AG04450 (cell line): ENCODE measurements at regions of chr3 and their contacts with region 1.

Region 1: GRCh38 chr3:114336122-114336697 is 42.4 kb downstream of the TIGIT start:
- DNase-seq: no peak
- H3K4me3 ChIP-seq: no peak overlapping the region
- H3K27ac ChIP-seq: no peak overlapping the region
- H3K27me3 ChIP-seq: no peaks in the 10 kb centered on the region
- CTCF ChIP-seq: peak; percentile 53

Region 2: GRCh38 chr3:114223143-114223542 is 113.1 kb before region 1 on chr3:
- CTCF ChIA-PET with region 1: no interaction called
- POLR2A ChIA-PET with region 1: no interaction called
- DNase-seq: no peak
- H3K4me3 ChIP-seq: no peak overlapping the region
- H3K27ac ChIP-seq: no peak overlapping the region
- H3K27me3 ChIP-seq: peaks cover 7% of the 10 kb centered on the region
- CTCF ChIP-seq: no peak

Region 3: GRCh38 chr3:114313426-114313825 is 22.8 kb before region 1 on chr3:
- CTCF ChIA-PET with region 1: interaction called, 10 read pairs
- POLR2A ChIA-PET with region 1: no interaction called
- DNase-seq: no peak
- H3K4me3 ChIP-seq: no peak overlapping the region
- H3K27ac ChIP-seq: no peak overlapping the region
- H3K27me3 ChIP-seq: no peaks in the 10 kb centered on the region
- CTCF ChIP-seq: no peak